CD8-positive, alpha-beta T cell (primary cell): ENCODE measurements at regions of chr4 and their contacts with region 1.

Region 1: GRCh38 chr4:13627606-13628301 is at the start of gene BOD1L1:
- DNase-seq: peak; percentile 43 to 93 (median 79)
- ATAC-seq: peak; percentile 70
- H3K4me3 ChIP-seq: peak within 1 kb of the TSS; percentile 65 to 81
- H3K4me3 Mint-ChIP-seq: peak within 1 kb of the TSS; percentile 92
- H3K27ac ChIP-seq: peak within 1 kb of the TSS; percentile 80 to 88
- H3K27ac Mint-ChIP-seq: peak within 1 kb of the TSS; percentile 97
- H3K4me1 ChIP-seq: peaks cover 26% of the 10 kb centered on the region
- H3K4me1 Mint-ChIP-seq: peaks cover 50% of the 10 kb centered on the region
- H3K27me3 ChIP-seq: no peaks in the 10 kb centered on the region
- H3K27me3 Mint-ChIP-seq: no peaks in the 10 kb centered on the region
- CTCF ChIP-seq: no peak
- total RNA-seq, gene BOD1L1: 44.0 to 48.3 TPM

Region 2: GRCh38 chr4:13484122-13484748 is 143.5 kb before region 1 on chr4 and contains the start of gene RAB28:
- CTCF ChIA-PET with region 1: no interaction called
- POLR2A ChIA-PET with region 1: no interaction called
- intact Hi-C with region 1: loop called (anchors 1 to 2 kb)
- DNase-seq: peak; percentile 86 to 96 (median 93)
- ATAC-seq: peak; percentile 88
- H3K4me3 ChIP-seq: peak within 1 kb of the TSS; percentile 84 to 96
- H3K4me3 Mint-ChIP-seq: peak within 1 kb of the TSS; percentile 84
- H3K27ac ChIP-seq: peak within 1 kb of the TSS; percentile 99
- H3K27ac Mint-ChIP-seq: peak within 1 kb of the TSS; percentile 100
- H3K4me1 ChIP-seq: peaks cover 15% of the 10 kb centered on the region
- H3K4me1 Mint-ChIP-seq: peaks cover 26% of the 10 kb centered on the region
- H3K27me3 ChIP-seq: no peaks in the 10 kb centered on the region
- H3K27me3 Mint-ChIP-seq: peaks cover 15% of the 10 kb centered on the region
- CTCF ChIP-seq: no peak
- total RNA-seq, gene RAB28: 4.2 to 4.6 TPM

Region 3: GRCh38 chr4:13665701-13666660 is 38.2 kb after region 1 on chr4:
- CTCF ChIA-PET with region 1: no interaction called
- POLR2A ChIA-PET with region 1: no interaction called
- intact Hi-C with region 1: loop called in 1 of 2 experiments (anchors 1 kb)
- DNase-seq: no peak
- ATAC-seq: no peak
- H3K4me3 ChIP-seq: no peak overlapping the region
- H3K4me3 Mint-ChIP-seq: no peak overlapping the region
- H3K27ac ChIP-seq: no peak overlapping the region
- H3K27ac Mint-ChIP-seq: no peak overlapping the region
- H3K4me1 ChIP-seq: no peaks in the 10 kb centered on the region
- H3K4me1 Mint-ChIP-seq: no peaks in the 10 kb centered on the region
- H3K27me3 ChIP-seq: no peaks in the 10 kb centered on the region
- H3K27me3 Mint-ChIP-seq: peaks cover 12% of the 10 kb centered on the region
- CTCF ChIP-seq: no peak

Region 4: DNA sequence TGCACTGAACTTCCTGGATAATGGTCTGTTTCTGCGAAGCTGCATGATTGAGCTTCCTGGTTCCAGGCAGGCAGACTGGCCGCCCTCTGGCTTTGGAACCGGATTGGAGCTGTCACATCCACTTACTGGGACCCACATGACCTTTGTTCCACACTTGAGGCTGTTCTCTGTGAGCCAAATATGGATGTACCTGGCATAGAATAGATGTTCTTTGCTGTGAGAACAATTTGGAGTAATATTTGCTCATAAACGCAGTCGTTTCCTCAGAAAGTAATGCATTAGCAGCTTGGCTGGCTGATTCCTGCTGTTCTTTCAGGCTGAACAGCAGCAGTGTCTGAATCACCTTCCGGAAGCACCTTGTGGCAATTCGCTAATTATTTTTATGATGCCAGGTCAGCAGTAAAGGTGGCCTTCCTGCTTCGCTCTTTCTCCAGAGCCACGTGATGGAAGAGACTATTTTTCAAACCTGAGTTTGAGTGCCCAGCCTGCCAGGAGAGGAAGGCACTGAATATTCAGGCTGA is 77.8 kb after region 1 on chr4:
- CTCF ChIA-PET with region 1: no interaction called
- POLR2A ChIA-PET with region 1: no interaction called
- intact Hi-C with region 1: no loop called
- DNase-seq: no peak
- ATAC-seq: no peak
- H3K4me3 ChIP-seq: no peak overlapping the region
- H3K4me3 Mint-ChIP-seq: no peak overlapping the region
- H3K27ac ChIP-seq: no peak overlapping the region
- H3K27ac Mint-ChIP-seq: no peak overlapping the region
- H3K4me1 ChIP-seq: no peaks in the 10 kb centered on the region
- H3K4me1 Mint-ChIP-seq: no peaks in the 10 kb centered on the region
- H3K27me3 ChIP-seq: no peaks in the 10 kb centered on the region
- H3K27me3 Mint-ChIP-seq: peaks cover 7% of the 10 kb centered on the region
- CTCF ChIP-seq: no peak

Region 5: GRCh38 chr4:15336410-15337172 is 1708.8 kb after region 1 on chr4:
- CTCF ChIA-PET with region 1: no interaction called
- POLR2A ChIA-PET with region 1: no interaction called
- intact Hi-C with region 1: no loop called
- DNase-seq: no peak
- ATAC-seq: no peak
- H3K4me3 ChIP-seq: no peak overlapping the region
- H3K4me3 Mint-ChIP-seq: no peak overlapping the region
- H3K27ac ChIP-seq: no peak overlapping the region
- H3K27ac Mint-ChIP-seq: no peak overlapping the region
- H3K4me1 ChIP-seq: no peaks in the 10 kb centered on the region
- H3K4me1 Mint-ChIP-seq: no peaks in the 10 kb centered on the region
- H3K27me3 ChIP-seq: no peaks in the 10 kb centered on the region
- H3K27me3 Mint-ChIP-seq: peaks cover 3% of the 10 kb centered on the region
- CTCF ChIP-seq: no peak